ENCODE measurements at regions of chr2 and their contacts with region 1.

Region 1: GRCh38 chr2:18378020-18378653 is 182.3 kb downstream of the RDH14 start:
- DNase-seq: peak in 7 of 9 experiments; percentile 4 to 41 (median 23)
- ATAC-seq: no peak
- H3K4me3 ChIP-seq: no peak overlapping the region
- H3K4me3 Mint-ChIP-seq: no peak overlapping the region
- H3K27ac ChIP-seq: no peak overlapping the region
- H3K27ac Mint-ChIP-seq: no peak overlapping the region
- H3K4me1 ChIP-seq: no peaks in the 10 kb centered on the region
- H3K4me1 Mint-ChIP-seq: no peaks in the 10 kb centered on the region
- H3K27me3 ChIP-seq: no peaks in the 10 kb centered on the region
- H3K27me3 Mint-ChIP-seq: peaks cover 17% of the 10 kb centered on the region
- CTCF ChIP-seq: peak; percentile 79

Region 2: GRCh38 chr2:18362696-18363349 is 15.3 kb before region 1 on chr2:
- CTCF ChIA-PET with region 1: interaction called, 18 read pairs
- POLR2A ChIA-PET with region 1: no interaction called
- intact Hi-C with region 1: no loop called
- DNase-seq: no peak
- ATAC-seq: no peak
- H3K4me3 ChIP-seq: no peak overlapping the region
- H3K4me3 Mint-ChIP-seq: no peak overlapping the region
- H3K27ac ChIP-seq: no peak overlapping the region
- H3K27ac Mint-ChIP-seq: no peak overlapping the region
- H3K4me1 ChIP-seq: no peaks in the 10 kb centered on the region
- H3K4me1 Mint-ChIP-seq: no peaks in the 10 kb centered on the region
- H3K27me3 ChIP-seq: no peaks in the 10 kb centered on the region
- H3K27me3 Mint-ChIP-seq: peaks cover 4% of the 10 kb centered on the region
- CTCF ChIP-seq: no peak

Region 3: DNA sequence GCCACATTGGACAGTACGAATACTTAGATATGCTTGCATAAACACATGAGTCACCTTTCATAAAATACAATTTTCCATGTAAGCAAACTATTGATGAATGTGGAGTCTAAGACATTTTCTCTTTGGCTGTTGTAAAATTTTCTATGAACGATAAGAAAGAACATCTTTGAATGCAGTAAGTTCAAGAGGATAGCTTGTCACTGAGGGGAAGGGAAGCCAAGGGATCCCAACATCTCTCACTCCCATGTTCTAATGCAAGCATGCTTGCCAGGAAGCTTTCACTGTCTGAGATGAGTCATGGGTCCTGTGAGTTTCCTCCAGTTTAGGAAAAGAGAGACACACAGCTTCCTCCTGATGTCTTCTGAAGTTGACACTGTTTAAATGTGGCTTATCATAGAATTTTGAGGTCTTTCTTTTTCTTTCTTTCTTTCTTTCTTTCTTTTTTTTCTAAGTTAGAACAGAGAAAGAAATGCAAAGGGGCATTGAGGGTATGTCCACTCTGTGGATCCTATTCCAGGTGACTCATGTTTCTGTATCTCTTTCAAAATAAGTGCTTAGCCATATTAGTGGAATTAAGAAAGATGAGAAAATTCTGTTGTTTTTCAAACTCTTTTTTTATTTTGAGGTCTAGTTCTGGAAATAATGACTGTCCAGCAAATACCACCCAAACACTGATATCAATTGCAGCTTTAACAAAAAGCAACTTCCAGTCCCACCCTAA is 35.7 kb after region 1 on chr2:
- CTCF ChIA-PET with region 1: no interaction called
- POLR2A ChIA-PET with region 1: no interaction called
- intact Hi-C with region 1: no loop called
- DNase-seq: no peak
- ATAC-seq: no peak
- H3K4me3 ChIP-seq: no peak overlapping the region
- H3K4me3 Mint-ChIP-seq: no peak overlapping the region
- H3K27ac ChIP-seq: no peak overlapping the region
- H3K27ac Mint-ChIP-seq: no peak overlapping the region
- H3K4me1 ChIP-seq: no peaks in the 10 kb centered on the region
- H3K4me1 Mint-ChIP-seq: no peaks in the 10 kb centered on the region
- H3K27me3 ChIP-seq: no peaks in the 10 kb centered on the region
- H3K27me3 Mint-ChIP-seq: peaks cover 9% of the 10 kb centered on the region
- CTCF ChIP-seq: no peak

Region 4: DNA sequence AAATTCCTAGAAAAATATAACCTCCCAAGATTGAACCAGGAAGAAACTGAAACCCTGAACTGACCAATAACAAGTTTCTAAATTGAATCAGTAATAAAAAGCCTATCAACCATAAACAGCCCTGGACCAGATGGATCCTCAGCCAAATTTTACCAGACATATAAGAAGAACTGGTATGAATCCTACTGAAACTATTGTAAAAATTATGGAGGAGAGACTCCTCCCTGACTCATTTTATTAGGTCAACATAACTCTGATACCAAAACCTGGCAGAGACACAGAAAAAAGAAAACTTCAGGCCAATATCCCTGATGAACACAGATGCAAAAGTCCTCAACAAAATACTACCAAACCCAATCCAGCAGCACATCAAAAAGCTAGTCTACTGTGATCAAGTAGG is 199.9 kb after region 1 on chr2:
- CTCF ChIA-PET with region 1: no interaction called
- POLR2A ChIA-PET with region 1: no interaction called
- intact Hi-C with region 1: no loop called
- DNase-seq: no peak
- ATAC-seq: no peak
- H3K4me3 ChIP-seq: no peak overlapping the region
- H3K4me3 Mint-ChIP-seq: no peak overlapping the region
- H3K27ac ChIP-seq: no peak overlapping the region
- H3K27ac Mint-ChIP-seq: no peak overlapping the region
- H3K4me1 ChIP-seq: no peaks in the 10 kb centered on the region
- H3K4me1 Mint-ChIP-seq: no peaks in the 10 kb centered on the region
- H3K27me3 ChIP-seq: no peaks in the 10 kb centered on the region
- H3K27me3 Mint-ChIP-seq: no peaks in the 10 kb centered on the region
- CTCF ChIP-seq: no peak